ENCODE measurements at regions of chr14 and their contacts with region 1.

Region 1: DNA sequence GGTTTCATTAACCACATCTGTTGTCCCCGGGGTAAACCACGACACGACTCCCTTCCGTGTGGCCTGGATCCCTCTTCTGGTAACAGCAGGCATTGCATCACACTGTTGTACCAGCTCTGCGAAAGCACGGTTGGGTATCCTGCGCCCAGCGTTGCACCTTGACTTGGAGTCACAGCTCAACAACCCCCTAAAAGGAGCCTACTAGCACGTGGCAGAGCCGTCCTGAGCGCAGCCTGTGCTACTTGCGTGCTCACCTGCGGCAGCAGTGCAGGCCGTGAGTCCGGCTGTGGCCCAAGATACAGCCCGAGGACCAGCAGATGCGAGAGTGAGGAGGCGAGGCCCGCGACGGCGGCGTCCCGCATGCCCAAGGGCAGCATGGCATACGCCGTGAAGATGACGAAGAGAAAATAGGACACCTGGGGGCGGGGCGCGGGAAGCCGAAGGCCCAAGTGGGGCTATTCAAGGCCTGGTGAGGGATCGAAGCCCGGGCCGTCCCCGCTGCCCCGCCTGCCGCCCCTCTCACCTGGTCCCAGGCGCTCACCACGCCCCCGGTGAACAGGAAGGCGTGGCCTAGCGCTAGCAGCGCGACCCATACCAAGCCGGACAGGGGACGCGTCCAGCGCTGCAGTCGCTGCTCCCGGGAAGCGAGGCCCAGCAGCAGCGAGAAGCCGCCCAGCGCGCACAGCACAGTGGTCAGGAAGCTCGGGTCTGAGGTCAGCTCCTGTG is 2.4 kb downstream of the ADCY4 start:
- DNase-seq: no peak
- H3K4me3 ChIP-seq: no peak overlapping the region
- H3K27me3 ChIP-seq: no peaks in the 10 kb centered on the region
- CTCF ChIP-seq: peak; percentile 84

Region 2: GRCh38 chr14:24290746-24291145 is 41.7 kb before region 1 on chr14:
- CTCF ChIA-PET with region 1: no interaction called
- POLR2A ChIA-PET with region 1: no interaction called
- DNase-seq: no peak
- H3K4me3 ChIP-seq: no peak overlapping the region
- H3K27me3 ChIP-seq: no peaks in the 10 kb centered on the region
- CTCF ChIP-seq: no peak

Region 3: GRCh38 chr14:24310646-24311604 is 21.5 kb before region 1 on chr14 and contains the start of gene LTB4R:
- CTCF ChIA-PET with region 1: interaction called, 60 read pairs
- POLR2A ChIA-PET with region 1: no interaction called
- DNase-seq: no peak
- H3K4me3 ChIP-seq: peak within 1 kb of the TSS; percentile 25
- H3K27me3 ChIP-seq: no peaks in the 10 kb centered on the region
- CTCF ChIP-seq: peak; percentile 33
- polyA plus RNA-seq, gene LTB4R: 2.5 and 2.6 TPM in 2 replicates

Region 4: DNA sequence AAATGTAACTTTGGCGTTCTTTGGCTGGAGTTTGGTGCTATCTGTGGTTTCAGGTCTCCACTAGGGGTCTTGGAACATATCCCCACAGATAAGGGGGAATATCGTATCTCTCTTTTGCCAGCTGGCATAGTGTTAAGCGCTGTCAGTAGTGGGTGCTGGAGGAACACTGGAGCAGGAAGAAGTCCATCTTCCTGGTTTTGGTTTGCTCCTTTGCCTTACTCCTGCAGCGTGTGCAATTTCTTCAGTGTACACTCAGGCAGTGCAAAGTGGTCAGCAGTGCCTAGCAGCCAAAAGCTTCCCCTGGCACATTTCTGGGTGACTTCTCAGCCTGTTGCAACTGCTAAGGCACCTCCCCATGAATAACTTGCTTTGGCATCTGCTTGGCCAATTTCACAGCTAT is 19.1 kb after region 1 on chr14:
- CTCF ChIA-PET with region 1: interaction called, 42 read pairs
- POLR2A ChIA-PET with region 1: no interaction called
- DNase-seq: no peak
- H3K4me3 ChIP-seq: no peak overlapping the region
- H3K27me3 ChIP-seq: peaks cover 6% of the 10 kb centered on the region; the same call in 1 of the 2 replicates
- CTCF ChIP-seq: peak; percentile 18

Region 5: DNA sequence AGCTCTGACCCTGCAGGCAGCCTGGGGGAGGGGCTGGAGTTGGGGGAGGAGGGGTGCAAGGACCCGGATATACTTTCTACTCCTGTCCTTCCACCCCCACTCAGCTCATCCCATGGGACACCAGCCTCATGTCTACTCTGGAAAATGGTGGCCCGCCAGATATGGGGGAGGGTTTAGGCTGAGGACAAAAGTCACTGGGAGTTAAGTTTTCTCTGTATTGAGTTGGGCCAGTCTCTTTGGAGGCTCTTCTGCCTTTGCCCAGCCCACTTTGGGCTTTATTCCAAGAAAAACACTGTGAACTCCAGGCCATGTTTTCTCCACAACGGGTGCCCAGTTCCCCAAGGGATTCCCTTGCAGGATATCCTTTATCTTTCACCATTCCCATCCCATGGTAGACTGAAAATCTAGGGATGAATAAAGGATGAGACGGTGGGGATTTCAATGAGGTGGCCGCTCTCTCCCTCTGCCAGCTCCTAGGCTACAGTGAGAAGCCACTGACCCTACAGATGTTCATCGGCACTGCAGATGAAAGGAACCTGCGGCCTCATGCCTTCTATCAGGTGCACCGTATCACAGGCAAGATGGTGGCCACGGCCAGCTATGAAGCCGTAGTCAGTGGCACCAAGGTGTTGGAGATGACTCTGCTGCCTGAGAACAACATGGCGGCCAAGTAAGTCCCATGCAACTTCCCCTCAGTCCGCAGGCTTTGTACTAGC is 40.4 kb after region 1 on chr14:
- CTCF ChIA-PET with region 1: interaction called, 51 read pairs
- POLR2A ChIA-PET with region 1: no interaction called
- DNase-seq: no peak
- H3K4me3 ChIP-seq: no peak overlapping the region
- H3K27me3 ChIP-seq: no peaks in the 10 kb centered on the region
- CTCF ChIP-seq: no peak

Region 6: DNA sequence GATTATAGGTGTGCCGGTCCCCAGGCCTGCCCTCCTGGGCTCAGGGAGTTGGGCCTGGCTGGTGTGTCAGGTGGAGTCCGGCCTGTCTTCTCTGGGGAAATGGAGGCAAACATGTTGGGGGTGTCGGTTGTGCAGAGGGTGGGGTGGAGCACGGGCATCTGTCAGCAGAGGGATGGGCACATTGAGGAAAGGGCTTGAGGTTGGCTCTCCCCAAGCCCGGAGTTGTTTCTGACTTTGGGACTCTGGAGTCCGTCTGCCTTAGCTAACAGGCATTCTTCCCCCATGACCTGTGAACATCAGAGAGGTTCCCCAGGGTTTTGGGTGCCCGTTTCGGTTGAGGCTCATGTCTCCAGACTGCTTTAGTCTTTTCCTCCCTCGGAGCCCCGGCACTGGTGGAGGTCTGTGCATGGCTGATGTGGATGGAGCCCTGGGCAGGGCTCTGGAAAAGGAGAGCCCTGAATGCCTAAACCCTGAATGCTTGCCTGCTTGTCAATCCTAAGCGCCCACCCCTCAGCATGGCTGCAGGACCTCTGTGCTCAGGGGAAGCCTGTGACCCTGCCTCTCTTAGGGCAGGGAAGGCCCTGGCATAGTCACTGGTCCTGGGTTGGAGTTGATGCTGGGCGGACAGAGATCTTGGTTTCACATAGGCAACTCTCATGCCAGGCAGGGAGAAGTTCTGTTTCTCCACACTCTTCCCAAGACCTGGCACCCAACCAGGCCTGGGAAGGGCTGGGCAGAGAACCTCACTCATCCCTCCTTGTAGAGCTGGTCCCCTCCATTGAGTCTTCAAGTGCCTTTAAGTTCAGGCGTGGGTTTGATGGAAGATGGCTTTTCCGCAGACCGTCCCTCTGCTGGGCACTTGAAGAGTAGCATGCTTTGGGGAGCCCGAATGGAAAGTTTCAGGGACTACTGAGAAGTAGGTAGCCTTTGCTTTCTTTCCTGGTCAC is 79.3 kb after region 1 on chr14:
- CTCF ChIA-PET with region 1: interaction called, 107 read pairs
- POLR2A ChIA-PET with region 1: no interaction called
- DNase-seq: no peak
- H3K4me3 ChIP-seq: no peak overlapping the region
- H3K27me3 ChIP-seq: no peaks in the 10 kb centered on the region
- CTCF ChIP-seq: peak; percentile 80

Region 7: GRCh38 chr14:24425704-24426103 is 93.3 kb after region 1 on chr14:
- CTCF ChIA-PET with region 1: interaction called, 491 read pairs
- POLR2A ChIA-PET with region 1: interaction called, 4 read pairs
- DNase-seq: no peak
- H3K4me3 ChIP-seq: no peak overlapping the region
- H3K27me3 ChIP-seq: no peaks in the 10 kb centered on the region
- CTCF ChIP-seq: no peak

Region 8: DNA sequence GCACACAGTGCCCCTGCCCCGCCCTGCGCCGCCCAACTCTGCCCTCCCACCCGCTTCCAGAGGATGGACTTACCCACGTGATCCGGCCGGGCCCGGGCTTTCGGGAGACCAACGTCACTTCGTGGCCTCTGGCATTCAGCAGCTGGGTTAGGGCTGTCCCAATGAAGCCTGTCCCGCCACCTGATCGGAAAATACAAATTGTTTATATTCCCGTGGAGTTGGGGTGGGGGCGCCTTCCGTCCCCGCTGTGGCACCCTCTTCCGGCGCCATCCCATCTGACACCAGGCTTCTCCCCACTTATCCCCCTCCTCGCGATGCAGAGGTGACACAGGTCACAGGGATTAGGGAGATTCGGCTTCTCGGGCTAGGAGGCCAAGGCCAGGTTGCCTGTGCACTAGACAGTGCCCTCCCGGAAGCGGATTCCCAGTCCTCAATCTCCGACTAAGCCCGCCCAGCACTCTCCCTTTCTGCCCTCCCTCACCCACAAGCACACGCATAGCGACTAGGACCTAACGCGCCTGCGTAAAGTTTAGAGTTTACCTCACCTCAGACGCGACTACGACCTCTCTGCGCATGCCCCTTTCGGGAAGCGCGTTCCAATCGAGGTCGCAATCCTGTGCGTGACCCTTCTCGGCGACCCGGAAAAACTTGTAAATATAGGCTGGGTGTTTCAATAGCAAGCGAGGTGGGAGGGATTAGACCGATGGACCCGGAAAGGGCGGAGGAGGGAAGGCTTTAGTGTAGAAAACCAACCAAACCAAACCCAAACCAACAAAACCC is 110.0 kb after region 1 on chr14 and contains the start of gene SDR39U1:
- CTCF ChIA-PET with region 1: interaction called, 491 read pairs
- POLR2A ChIA-PET with region 1: interaction called, 9 read pairs
- DNase-seq: peak; percentile 98
- H3K4me3 ChIP-seq: peak within 1 kb of the TSS; percentile 60
- H3K27me3 ChIP-seq: no peaks in the 10 kb centered on the region
- CTCF ChIP-seq: no peak
- polyA plus RNA-seq, gene SDR39U1: 28.9 and 43.4 TPM in 2 replicates

Region 9: DNA sequence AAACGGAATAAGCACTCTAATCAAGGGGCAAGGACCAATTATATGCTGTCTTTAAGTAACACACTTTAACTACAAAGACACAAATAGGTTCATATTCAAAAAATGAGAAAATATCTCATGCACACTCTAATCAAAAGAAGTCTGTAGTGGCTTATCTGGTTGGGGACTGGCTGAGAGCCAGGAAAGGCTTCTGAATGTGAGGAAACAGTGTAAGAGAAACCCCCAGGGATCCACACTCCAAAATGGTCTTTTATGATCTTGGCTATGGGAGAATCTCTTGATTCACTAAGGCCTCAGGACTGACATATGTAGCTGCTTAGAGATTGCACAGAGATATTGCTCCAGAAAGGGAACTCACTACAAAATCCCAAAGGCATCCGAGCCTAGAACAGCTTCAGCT is 233.3 kb after region 1 on chr14:
- CTCF ChIA-PET with region 1: no interaction called
- POLR2A ChIA-PET with region 1: no interaction called
- DNase-seq: no peak
- H3K4me3 ChIP-seq: no peak overlapping the region
- H3K27me3 ChIP-seq: no peaks in the 10 kb centered on the region
- CTCF ChIP-seq: no peak

Region 10: GRCh38 chr14:26163791-26164190 is 1831.4 kb after region 1 on chr14:
- CTCF ChIA-PET with region 1: no interaction called
- POLR2A ChIA-PET with region 1: no interaction called
- DNase-seq: no peak
- H3K4me3 ChIP-seq: no peak overlapping the region
- H3K27me3 ChIP-seq: no peaks in the 10 kb centered on the region
- CTCF ChIP-seq: no peak

Measured in BJ (cell line).